Panc1 (cell line): ENCODE measurements at regions of chr19 and their contacts with region 1.

Region 1: GRCh38 chr19:39397360-39398296 is 6.5 kb downstream of the MED29 start:
- DNase-seq: peak; percentile 100
- ATAC-seq: peak; percentile 78
- H3K4me3 ChIP-seq: no peak overlapping the region
- H3K27ac ChIP-seq: peak overlapping the region; percentile 75
- H3K4me1 ChIP-seq: peaks cover 51% of the 10 kb centered on the region
- H3K27me3 ChIP-seq: no peaks in the 10 kb centered on the region
- CTCF ChIP-seq: no peak

Region 2: DNA sequence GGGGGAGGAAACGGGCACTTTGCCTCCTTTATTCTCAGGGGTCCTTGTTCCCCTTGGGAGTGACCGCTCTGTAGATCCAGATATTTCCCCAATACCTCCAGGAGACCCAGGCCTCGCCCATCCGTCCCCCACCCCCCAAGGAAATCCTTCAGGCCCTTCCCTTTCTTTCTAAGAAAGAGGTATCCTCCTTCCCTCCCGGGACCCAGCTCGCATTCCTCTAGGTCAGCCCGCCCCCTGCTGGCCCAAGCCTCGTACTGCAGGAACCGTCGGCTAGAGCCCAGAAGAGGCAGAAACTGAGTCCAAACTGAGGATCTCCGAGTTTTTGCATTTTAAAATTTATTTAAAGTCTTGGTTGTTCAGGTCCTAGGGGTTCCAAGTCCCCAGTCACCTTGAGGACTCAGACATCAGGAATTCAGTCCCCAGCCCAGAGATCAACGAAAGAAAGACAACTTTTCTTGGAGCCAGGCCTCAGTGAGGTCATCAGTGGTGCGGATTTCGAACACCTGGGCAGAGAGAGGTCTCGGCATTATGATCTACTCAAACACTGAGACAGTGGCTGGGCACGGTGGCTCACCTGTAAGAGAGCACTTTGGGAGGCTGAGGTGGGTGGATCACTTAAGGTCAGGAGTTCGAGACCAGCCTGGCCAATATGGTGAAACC is 69.5 kb before region 1 on chr19:
- CTCF ChIA-PET with region 1: interaction called, 12 read pairs
- POLR2A ChIA-PET with region 1: interaction called, 4 read pairs
- in situ Hi-C with region 1: no loop called
- intact Hi-C with region 1: no loop called
- DNase-seq: peak; percentile 97
- ATAC-seq: peak; percentile 84
- H3K4me3 ChIP-seq: no peak overlapping the region
- H3K27ac ChIP-seq: peak overlapping the region; percentile 2
- H3K4me1 ChIP-seq: peaks cover 7% of the 10 kb centered on the region; the same call in 1 of the 2 replicates
- H3K27me3 ChIP-seq: no peaks in the 10 kb centered on the region
- CTCF ChIP-seq: no peak

Region 3: GRCh38 chr19:39363901-39364457 is 33.6 kb before region 1 on chr19:
- CTCF ChIA-PET with region 1: interaction called, 20 read pairs
- POLR2A ChIA-PET with region 1: interaction called, 6 read pairs
- in situ Hi-C with region 1: no loop called
- intact Hi-C with region 1: no loop called
- DNase-seq: no peak
- ATAC-seq: peak; percentile 1; the same call in 1 of the 2 replicates
- H3K4me3 ChIP-seq: no peak overlapping the region
- H3K27ac ChIP-seq: no peak overlapping the region
- H3K4me1 ChIP-seq: peaks cover 5% of the 10 kb centered on the region; the same call in 1 of the 2 replicates
- H3K27me3 ChIP-seq: no peaks in the 10 kb centered on the region
- CTCF ChIP-seq: no peak

Region 4: DNA sequence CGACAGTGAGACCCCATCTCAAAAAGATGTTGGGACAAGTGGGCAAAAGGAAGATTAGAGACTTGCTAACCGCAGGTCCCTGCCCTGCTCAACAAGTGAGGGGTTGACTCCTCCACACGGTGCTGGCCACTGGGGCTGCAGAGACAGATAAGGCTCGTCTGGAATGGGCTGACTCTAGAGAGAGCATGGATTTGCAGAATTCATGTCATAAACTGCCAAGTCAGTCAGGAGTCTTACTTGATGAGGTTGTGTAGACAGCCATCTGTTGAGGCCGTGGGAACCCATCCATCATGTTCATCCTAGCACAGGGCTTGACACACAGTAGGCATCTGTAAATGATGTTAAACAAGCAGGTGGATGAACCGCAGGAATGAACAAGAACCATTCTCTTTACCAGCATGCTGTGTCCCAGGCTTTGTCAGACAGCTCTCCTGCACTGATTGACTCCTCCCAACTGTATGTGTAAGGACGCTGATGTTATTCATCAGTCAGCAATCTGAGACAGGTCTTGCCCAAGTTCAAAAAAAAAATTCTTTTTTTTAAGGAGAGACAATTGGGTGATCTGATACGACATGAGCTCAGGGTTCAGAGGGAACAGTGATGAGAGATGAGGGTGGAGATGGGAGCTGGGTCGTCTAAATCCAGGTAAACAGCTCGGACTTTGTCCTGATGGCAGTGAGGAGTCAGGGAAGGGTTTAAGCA is 15.6 kb before region 1 on chr19:
- CTCF ChIA-PET with region 1: interaction called, 20 read pairs
- POLR2A ChIA-PET with region 1: interaction called, 6 read pairs
- in situ Hi-C with region 1: no loop called
- intact Hi-C with region 1: no loop called
- DNase-seq: no peak
- ATAC-seq: 0 out of 2 replicates have a peak, but pooled peaks have one; percentile 4
- H3K4me3 ChIP-seq: no peak overlapping the region
- H3K27ac ChIP-seq: no peak overlapping the region
- H3K4me1 ChIP-seq: peaks cover 21% of the 10 kb centered on the region
- H3K27me3 ChIP-seq: no peaks in the 10 kb centered on the region
- CTCF ChIP-seq: no peak

Region 5: DNA sequence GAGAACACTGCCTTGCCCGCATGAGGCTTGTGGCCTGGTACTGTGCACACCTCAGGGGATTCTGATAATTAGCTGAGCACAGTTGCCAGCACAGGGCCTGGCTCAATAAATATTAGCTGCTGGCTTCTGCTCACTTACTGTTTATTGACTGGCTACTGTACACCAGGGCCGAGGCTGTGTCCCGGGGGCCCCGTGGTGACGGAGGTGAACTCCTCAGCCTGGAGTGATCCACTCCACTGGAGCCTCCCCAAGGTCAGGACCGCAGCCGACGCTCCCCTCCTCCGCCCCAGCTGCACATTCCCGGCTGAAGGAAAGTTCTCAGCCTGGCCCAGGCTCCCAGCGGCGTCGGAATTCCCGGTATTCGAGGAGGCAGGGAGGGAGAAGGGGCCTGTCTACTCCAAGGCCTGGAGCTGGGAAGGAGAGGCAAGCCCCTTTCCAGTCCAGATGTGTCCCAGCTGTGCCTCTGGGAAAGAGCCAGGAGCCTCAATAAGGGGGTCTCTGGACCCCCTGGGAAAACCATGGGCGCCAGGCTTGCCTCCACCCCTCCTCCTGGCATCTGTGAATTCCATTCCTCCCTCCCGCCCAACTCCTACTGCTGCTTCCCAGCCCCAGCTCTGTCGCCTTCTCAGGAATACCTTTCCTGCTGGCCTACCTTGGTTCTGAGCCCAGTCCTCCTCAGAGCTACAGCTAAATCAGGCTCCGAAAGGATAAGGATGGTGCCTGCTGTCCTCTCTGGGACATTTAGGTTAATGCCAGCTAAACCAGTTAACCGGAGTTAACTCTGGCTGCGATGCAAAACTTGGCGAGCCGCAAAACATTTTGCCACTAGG is 30.9 kb after region 1 on chr19:
- CTCF ChIA-PET with region 1: interaction called, 29 read pairs
- POLR2A ChIA-PET with region 1: interaction called, 524 read pairs
- in situ Hi-C with region 1: loop called (anchors 5 kb)
- intact Hi-C with region 1: no loop called
- DNase-seq: peak; percentile 92
- ATAC-seq: peak; percentile 70
- H3K4me3 ChIP-seq: peak overlapping the region; percentile 0 to 17; a peak in 3 of 4 replicates
- H3K27ac ChIP-seq: peak overlapping the region; percentile 86
- H3K4me1 ChIP-seq: peaks cover 75% of the 10 kb centered on the region
- H3K27me3 ChIP-seq: no peaks in the 10 kb centered on the region
- CTCF ChIP-seq: no peak

Region 6: DNA sequence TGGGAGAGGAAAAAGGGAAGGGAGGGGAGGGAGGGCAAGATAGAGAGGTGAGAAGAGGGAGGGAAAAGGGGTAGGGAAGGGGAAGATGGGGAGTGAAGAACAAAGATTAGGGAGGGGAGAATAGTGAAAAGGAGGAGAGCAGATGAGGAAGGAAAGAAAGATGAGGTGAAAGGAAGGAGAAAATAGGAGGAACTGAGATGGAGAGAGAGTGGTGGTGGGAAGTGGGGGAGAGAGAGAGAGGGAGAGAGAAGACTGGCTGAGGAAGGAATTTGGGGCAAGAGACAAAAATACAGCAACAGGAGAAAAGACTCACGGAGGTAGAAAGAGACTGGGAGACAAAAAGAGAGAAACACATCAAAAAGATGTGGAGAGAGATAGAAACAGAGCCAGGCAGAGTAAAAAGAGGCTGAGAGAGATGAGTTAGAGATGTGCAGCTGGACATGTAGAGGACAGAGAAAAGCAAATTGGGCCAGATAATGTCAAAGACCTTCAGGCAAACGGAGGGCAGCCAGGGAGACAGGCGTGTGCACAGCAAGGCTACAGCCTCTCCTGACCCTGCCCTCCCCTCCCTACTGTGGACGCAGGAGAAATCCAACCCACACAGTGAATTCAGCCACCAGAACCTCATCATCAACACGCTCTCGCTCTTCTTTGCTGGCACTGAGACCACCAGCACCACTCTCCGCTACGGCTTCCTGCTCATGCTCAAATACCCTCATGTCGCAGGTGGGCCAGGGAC is 1544.0 kb after region 1 on chr19:
- CTCF ChIA-PET with region 1: no interaction called
- POLR2A ChIA-PET with region 1: no interaction called
- in situ Hi-C with region 1: no loop called
- intact Hi-C with region 1: no loop called
- DNase-seq: no peak
- ATAC-seq: 0 out of 2 replicates have a peak, but pooled peaks have one; percentile 42
- H3K4me3 ChIP-seq: no peak overlapping the region
- H3K27ac ChIP-seq: no peak overlapping the region
- H3K4me1 ChIP-seq: no peaks in the 10 kb centered on the region
- H3K27me3 ChIP-seq: no peaks in the 10 kb centered on the region
- CTCF ChIP-seq: no peak